Thyroid gland (tissue), 4 donors: ENCODE measurements at regions of chr1 and their contacts with region 1.

Region 1: GRCh38 chr1:115807723-115808122 is 33.2 kb downstream of the NHLH2 start:
- DNase-seq: peak; percentile 57
- H3K4me3 ChIP-seq: no peak overlapping the region
- H3K27ac ChIP-seq: no peak overlapping the region
- H3K4me1 ChIP-seq: no peaks in the 10 kb centered on the region
- H3K27me3 ChIP-seq: no peaks in the 10 kb centered on the region
- CTCF ChIP-seq: peak; percentile 39 to 70 (median 58)
- POLR2A ChIP-seq: no peak

Region 2: GRCh38 chr1:115865704-115866380 is 58.1 kb after region 1 on chr1:
- intact Hi-C with region 1: no loop called
- DNase-seq: no peak
- H3K4me3 ChIP-seq: no peak overlapping the region
- H3K27ac ChIP-seq: no peak overlapping the region
- H3K4me1 ChIP-seq: no peaks in the 10 kb centered on the region
- H3K27me3 ChIP-seq: no peaks in the 10 kb centered on the region
- CTCF ChIP-seq: no peak
- POLR2A ChIP-seq: no peak

Region 3: DNA sequence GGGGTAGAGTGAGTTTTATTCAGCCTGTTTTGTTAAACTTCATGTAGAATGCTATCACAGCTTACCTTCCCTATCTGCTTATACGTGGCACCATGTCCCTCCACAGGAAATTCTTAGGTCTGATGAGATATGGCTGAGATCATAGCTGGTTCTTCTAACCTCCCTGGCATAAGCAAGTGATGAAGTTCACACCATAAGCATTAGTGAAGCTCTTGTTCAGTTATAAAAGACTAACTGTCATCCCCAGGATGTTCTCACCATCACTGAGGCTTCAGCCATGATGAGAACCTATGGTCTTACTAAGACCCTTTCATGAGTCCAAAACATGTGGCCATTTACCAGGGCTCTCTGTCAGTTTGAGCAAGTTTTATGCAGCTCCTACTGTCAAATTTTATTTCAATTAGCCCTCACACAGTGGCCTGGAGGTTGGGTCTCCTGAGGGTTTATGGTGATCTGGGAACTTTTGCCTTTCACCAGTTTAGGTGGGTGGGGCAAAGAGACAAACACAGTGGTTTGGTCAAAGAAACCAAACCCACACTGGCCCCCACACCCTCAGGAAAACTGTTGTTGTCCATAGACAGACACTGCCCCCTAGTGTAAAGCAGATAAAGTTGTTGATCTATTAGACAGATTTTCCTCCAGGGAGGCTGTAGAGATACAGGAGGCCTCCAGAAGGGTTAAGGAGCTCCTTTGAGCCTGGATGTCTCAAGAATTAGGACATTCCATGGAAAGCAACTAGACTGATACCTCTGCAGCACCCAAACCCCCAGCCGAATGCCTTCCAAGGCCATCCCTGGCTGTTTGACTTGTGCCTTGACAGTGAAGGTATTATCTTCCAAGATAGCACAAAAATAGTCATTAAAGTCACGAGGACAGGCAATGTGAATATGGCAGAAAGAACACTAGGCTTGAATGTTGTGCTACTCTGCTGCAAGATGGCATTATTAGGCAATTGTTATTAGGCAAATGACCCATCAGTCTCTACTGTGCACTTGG is 173.6 kb after region 1 on chr1:
- intact Hi-C with region 1: loop called (anchors 5 kb)
- DNase-seq: peak; percentile 17 to 22
- H3K4me3 ChIP-seq: no peak overlapping the region
- H3K27ac ChIP-seq: no peak overlapping the region
- H3K4me1 ChIP-seq: no peaks in the 10 kb centered on the region
- H3K27me3 ChIP-seq: no peaks in the 10 kb centered on the region
- CTCF ChIP-seq: peak; percentile 30 to 77 (median 62)
- POLR2A ChIP-seq: no peak